Dendritic cell treated with granulocyte-macrophage colony-stimulating factor and Interleukin-4, amounts not matched to agents 40 ng/mL and 50 ng/mL, for 4 days (primary cell): ENCODE measurements at regions of chr7 and their contacts with region 1.

Region 1: DNA sequence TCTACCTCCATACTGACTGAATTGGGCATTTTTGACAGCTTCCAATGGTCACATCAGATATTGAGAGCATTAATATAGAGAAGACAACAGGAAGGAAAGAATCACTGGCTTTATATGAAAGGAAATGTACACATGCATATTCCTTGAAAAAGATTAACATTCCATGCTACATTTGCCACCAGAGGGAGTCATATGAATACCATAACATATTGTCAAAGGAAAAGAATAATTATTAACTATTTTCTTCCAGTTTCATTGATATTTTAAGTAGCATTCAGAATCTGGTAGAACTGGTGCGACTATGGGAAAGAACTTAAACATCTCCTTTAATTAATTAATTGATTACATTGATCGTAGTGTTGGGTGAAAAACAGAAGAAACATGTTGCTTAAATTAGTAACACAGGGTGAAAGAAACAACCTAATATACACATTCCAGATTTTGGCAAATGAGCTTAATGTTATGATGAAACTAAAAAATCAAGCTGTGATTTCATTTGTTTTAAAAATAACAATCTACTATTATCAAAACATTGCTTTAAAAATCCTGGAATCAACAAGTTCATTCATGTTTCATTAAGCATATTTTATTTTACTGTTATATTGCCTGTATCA is 71.5 kb downstream of the GPR85 start:
- H3K4me3 Mint-ChIP-seq: no peak overlapping the region
- H3K27ac Mint-ChIP-seq: no peak overlapping the region
- H3K4me1 Mint-ChIP-seq: no peaks in the 10 kb centered on the region
- H3K27me3 Mint-ChIP-seq: no peaks in the 10 kb centered on the region

Region 2: DNA sequence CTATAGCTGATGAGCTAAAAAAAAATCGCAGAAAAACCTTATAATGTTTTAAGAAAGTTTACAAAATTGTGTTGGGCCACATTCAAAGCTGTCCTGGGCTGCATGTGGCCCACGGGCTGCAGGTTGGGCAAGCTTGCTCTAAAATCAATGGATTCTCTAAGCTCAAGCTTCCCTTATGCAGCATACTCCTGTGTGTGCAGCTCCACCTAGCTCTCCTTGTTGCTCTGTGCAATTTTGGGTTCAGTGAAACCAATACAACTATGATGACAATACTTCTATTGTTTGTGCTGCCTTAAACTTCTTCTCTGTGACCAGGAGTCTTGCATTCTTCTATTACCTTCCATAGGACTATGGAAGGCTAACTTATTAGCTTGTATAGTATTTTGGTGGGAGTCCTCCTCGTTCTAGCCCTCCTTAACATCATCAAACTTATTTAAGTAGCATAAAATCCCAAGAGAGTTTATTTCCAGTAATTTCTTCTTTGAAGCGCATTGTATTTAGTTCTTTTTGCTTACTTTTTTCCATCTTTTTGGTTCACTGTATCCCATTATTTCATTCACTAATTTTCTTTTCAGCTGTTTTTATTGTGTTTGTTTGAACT is 274.1 kb after region 1 on chr7:
- intact Hi-C with region 1: loop called (anchors 5 kb)
- H3K4me3 Mint-ChIP-seq: no peak overlapping the region
- H3K27ac Mint-ChIP-seq: no peak overlapping the region
- H3K4me1 Mint-ChIP-seq: no peaks in the 10 kb centered on the region
- H3K27me3 Mint-ChIP-seq: no peaks in the 10 kb centered on the region

Region 3: DNA sequence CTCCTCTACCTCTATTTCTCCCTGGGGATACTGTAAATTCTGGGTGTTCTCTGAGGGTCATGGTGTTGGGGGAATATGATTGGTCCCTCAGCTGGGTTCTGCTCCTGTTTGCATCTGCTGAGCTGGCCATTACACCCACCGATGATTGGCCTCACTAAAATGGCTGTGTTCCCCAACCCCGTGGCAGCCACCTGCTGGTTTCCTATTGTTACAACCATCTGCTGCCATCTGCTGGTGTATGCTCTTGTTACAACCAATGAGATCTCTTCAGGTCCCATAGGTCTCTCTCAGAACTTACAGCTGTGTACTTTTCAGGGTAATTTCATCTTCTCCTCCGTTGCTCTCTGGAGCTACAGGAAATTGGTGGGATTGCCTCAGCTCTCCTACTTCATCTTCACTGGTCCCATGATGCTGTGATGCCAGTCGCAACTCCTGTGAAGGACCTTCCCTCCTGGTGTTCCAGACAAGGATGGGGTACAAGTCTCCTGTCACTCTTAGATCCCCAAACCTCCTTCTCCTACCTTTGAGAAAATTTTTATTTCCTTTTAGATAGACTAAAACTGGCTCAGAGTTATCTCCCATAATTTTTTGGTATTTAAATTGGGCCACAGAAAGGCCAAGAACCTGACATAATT is 406.7 kb after region 1 on chr7:
- intact Hi-C with region 1: loop called (anchors 1 kb)
- H3K4me3 Mint-ChIP-seq: no peak overlapping the region
- H3K27ac Mint-ChIP-seq: no peak overlapping the region
- H3K4me1 Mint-ChIP-seq: peaks cover 6% of the 10 kb centered on the region
- H3K27me3 Mint-ChIP-seq: no peaks in the 10 kb centered on the region

Region 4: DNA sequence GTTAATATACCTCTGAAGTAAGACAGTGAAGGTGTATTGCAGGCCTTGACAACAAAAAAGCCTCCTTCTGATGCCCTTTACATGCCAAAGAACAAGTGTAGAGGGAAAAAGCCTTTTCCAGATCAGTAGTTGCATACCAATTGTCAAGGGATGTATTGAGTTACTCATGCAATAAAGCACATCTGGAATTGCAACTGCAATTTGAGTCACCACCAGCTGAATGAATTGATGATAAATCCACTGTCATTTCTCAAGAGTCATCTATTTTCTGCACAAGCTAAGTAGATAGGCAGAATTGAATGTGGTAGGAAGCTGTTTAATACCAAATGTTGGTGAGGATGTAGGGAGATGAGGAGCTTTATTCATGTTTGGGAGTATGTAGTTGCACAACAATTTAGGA is 429.1 kb after region 1 on chr7:
- intact Hi-C with region 1: no loop called
- H3K4me3 Mint-ChIP-seq: no peak overlapping the region
- H3K27ac Mint-ChIP-seq: no peak overlapping the region
- H3K4me1 Mint-ChIP-seq: no peaks in the 10 kb centered on the region
- H3K27me3 Mint-ChIP-seq: no peaks in the 10 kb centered on the region